Activated CD4-positive, alpha-beta T cell treated with anti-CD3 and anti-CD28 coated beads for 36 hours (primary cell): ENCODE measurements at regions of chr12 and their contacts with region 1.

Region 1: GRCh38 chr12:84502907-84503787 is 409.5 kb downstream of the SLC6A15 start:
- DNase-seq: peak; percentile 51
- ATAC-seq: peak; percentile 55
- H3K4me3 Mint-ChIP-seq: no peak overlapping the region
- H3K27ac Mint-ChIP-seq: no peak overlapping the region
- H3K4me1 Mint-ChIP-seq: no peaks in the 10 kb centered on the region
- H3K27me3 Mint-ChIP-seq: no peaks in the 10 kb centered on the region

Region 2: DNA sequence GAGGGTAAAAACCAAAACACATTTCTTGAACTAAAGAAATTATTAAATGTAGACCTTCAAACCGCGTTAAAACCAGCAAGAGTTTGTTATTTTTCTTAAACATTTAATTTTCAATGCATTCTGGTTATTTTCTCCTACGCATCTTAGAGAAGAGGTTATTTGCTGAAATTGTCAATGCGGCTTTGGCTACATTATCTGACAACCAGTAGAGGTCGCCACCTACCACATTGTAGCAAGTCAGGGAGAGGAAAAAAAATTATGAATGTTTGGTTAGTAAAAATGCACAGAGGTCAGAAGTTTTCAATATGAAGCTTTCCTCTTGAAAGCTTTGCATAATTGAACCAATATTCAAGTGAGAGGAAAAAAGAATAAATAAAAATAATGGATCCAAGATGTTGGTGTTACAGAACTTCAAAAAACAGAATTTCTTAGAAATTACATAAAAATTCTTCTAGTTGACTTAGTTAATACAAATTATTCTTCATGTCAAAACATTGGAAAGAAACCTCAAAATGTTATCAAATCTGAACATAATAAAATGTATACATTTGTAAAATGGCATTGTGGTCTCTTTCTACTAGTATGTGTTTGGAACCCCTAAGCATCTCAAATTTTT is 1975.9 kb before region 1 on chr12:
- CTCF ChIA-PET with region 1: no interaction called
- POLR2A ChIA-PET with region 1: no interaction called
- intact Hi-C with region 1: loop called (anchors 1 to 5 kb)
- DNase-seq: peak; percentile 45
- ATAC-seq: peak; percentile 47
- H3K4me3 Mint-ChIP-seq: no peak overlapping the region
- H3K27ac Mint-ChIP-seq: no peak overlapping the region
- H3K4me1 Mint-ChIP-seq: no peaks in the 10 kb centered on the region
- H3K27me3 Mint-ChIP-seq: peaks cover 5% of the 10 kb centered on the region

Region 3: DNA sequence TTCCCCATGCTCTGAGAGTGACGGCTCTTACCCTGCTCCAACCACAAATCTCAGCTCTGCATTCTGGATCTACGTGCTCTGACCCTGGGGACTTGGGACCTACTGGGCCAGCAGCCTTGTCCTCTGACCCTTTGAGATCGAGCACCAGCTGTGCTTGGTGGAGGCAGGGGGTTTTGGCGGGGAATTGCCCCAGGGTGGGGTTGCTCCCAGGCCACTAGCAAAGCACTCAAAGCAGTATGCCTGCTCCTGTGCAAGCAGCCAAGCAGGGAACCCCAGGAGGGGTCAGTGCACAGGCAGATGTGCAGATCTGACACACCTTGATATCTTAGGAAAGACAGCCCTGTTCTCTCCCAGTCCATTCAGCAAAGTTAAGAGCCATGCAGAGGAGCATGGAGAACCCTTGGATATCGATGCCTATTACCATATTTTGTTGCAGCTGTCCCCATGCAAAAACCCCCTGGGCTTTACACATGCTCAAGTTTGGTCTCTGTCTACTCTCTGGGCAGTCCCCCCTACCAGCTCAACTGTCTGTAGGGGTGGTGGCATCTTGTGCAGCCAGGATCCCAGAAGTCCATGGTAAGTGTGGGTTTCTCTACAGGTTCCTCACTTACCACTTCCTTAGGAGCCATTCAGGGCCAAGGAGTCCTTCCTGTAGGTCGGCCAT is 1497.5 kb before region 1 on chr12:
- CTCF ChIA-PET with region 1: no interaction called
- POLR2A ChIA-PET with region 1: no interaction called
- intact Hi-C with region 1: loop called in 1 of 2 experiments (anchors 2 kb)
- DNase-seq: no peak
- ATAC-seq: no peak
- H3K4me3 Mint-ChIP-seq: no peak overlapping the region
- H3K27ac Mint-ChIP-seq: no peak overlapping the region
- H3K4me1 Mint-ChIP-seq: no peaks in the 10 kb centered on the region
- H3K27me3 Mint-ChIP-seq: no peaks in the 10 kb centered on the region

Region 4: GRCh38 chr12:84450475-84450874 is 52.7 kb before region 1 on chr12:
- CTCF ChIA-PET with region 1: no interaction called
- POLR2A ChIA-PET with region 1: no interaction called
- intact Hi-C with region 1: no loop called
- DNase-seq: no peak
- ATAC-seq: no peak
- H3K4me3 Mint-ChIP-seq: no peak overlapping the region
- H3K27ac Mint-ChIP-seq: no peak overlapping the region
- H3K4me1 Mint-ChIP-seq: no peaks in the 10 kb centered on the region
- H3K27me3 Mint-ChIP-seq: no peaks in the 10 kb centered on the region